HCT116 (cell line): ENCODE measurements at regions of chr11 and their contacts with region 1.

Region 1: DNA sequence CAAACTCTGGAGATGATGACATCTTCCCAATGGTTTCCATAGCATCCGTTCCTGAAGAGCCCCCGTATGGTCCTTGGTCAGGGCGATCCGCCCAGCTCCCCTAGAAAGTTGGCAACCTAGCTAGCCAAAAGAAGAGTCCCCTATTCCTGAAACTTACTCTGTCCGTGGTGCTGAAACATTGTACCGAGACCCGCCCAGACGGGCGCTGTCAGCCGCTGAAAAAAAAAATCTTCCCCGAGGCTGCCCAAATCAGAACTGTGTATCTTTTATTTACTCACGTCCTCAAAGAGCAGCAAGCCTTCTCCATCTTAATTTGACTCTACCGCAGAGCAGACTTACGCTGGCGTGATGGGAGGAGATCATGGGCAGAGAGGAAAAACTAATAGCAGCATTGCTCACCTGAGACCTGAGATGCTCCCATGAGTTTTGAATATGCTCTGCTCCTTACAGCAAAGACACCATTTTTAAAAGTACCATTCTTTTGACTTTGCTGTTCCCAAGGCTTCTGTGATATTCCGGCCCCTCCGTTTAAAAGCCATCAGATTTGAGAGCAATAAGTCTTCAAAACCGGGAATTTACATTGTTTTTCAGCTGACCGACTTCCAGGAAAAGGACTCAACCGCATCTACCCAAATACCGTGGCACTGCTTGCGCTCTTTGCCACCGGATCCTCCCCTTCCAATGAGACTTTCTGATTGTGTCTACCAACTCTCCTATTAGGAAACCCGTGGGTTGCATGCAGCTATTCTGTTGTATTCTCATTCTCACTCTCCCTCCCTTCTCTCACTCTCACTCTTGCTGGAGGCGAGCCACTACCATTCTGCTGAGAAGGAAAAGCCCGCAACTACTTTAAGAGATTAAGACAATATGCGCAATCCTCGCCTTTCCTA is at the start of gene SLC17A6:
- DNase-seq: no peak
- ATAC-seq: no peak
- H3K4me3 ChIP-seq: no peak within 1 kb of the TSS
- H3K27ac ChIP-seq: no peak within 1 kb of the TSS
- H3K4me1 ChIP-seq: no peaks in the 10 kb centered on the region
- H3K27me3 ChIP-seq: no peaks in the 10 kb centered on the region
- CTCF ChIP-seq: no peak
- POLR2A ChIP-seq: no peak
- RAD21 ChIP-seq: no peak
- total RNA-seq, gene SLC17A6: not detected

Region 2: GRCh38 chr11:21675049-21675616 is 662.7 kb before region 1 on chr11:
- CTCF ChIA-PET with region 1: no interaction called
- POLR2A ChIA-PET with region 1: no interaction called
- RAD21 ChIA-PET with region 1: no interaction called
- intact Hi-C with region 1: no loop called
- DNase-seq: no peak
- ATAC-seq: no peak
- H3K4me3 ChIP-seq: no peak overlapping the region
- H3K27ac ChIP-seq: no peak overlapping the region
- H3K4me1 ChIP-seq: no peaks in the 10 kb centered on the region
- H3K27me3 ChIP-seq: no peaks in the 10 kb centered on the region
- CTCF ChIP-seq: no peak
- POLR2A ChIP-seq: no peak
- RAD21 ChIP-seq: no peak

Region 3: GRCh38 chr11:22787551-22788162 is 449.8 kb after region 1 on chr11:
- CTCF ChIA-PET with region 1: interaction called, 5 read pairs
- POLR2A ChIA-PET with region 1: no interaction called
- RAD21 ChIA-PET with region 1: no interaction called
- intact Hi-C with region 1: loop called (anchors 1 kb)
- DNase-seq: peak; percentile 22
- ATAC-seq: peak; percentile 62
- H3K4me3 ChIP-seq: no peak overlapping the region
- H3K27ac ChIP-seq: no peak overlapping the region
- H3K4me1 ChIP-seq: peaks cover 1 to 10% of the 10 kb centered on the region in 2 experiments; a peak in 3 of 4 replicates
- H3K27me3 ChIP-seq: peaks cover 23% of the 10 kb centered on the region
- CTCF ChIP-seq: peak; percentile 48 to 79 (median 53); a peak in 4 of 6 replicates
- POLR2A ChIP-seq: no peak
- RAD21 ChIP-seq: peak; percentile 62